ENCODE measurements at regions of chr19 and their contacts with region 1.

Region 1: DNA sequence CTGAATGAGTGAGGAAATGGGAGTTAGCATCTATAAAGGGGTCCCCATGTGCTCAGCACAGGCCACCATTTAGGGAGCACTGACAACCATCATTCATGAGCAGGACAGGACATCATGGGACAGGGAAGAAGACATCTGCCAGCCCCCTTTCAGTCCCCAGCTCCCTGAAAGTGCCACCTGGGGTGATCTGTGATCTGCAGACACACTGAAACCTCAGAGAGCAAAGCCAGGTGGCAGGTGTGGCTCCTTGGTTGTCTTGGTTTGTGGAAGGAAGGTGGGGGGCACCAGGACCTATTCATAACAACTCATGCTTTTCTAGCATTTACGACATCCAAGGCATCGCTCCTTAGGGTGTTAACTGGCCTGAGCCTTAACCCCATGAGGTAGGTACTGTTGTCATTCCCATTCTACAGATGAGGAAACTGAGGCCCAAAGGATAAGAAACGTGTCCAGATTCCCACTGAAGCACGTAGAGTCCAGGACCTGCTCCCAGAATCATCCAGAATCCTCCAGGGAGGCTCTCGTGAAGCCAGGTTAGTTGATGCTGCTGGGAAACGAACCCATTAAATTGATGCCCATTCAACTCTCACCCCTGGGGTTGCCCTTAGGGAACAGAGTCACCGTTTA is 5.8 kb downstream of the KDELR1 start:
- DNase-seq: no peak
- H3K4me3 ChIP-seq: no peak overlapping the region
- H3K27ac ChIP-seq: no peak overlapping the region
- H3K4me1 ChIP-seq: no peaks in the 10 kb centered on the region; a peak in 1 of 7 replicates
- H3K27me3 ChIP-seq: no peaks in the 10 kb centered on the region
- CTCF ChIP-seq: no peak
- EP300 ChIP-seq: no peak
- POLR2A ChIP-seq: no peak
- RAD21 ChIP-seq: no peak

Region 2: GRCh38 chr19:48372904-48373303 is 12.7 kb before region 1 on chr19:
- CTCF ChIA-PET with region 1: interaction called, 14 read pairs
- POLR2A ChIA-PET with region 1: interaction called, 10 read pairs
- DNase-seq: no peak
- H3K4me3 ChIP-seq: no peak overlapping the region
- H3K27ac ChIP-seq: no peak overlapping the region
- H3K4me1 ChIP-seq: no peaks in the 10 kb centered on the region; a peak in 1 of 7 replicates
- H3K27me3 ChIP-seq: peaks cover 0 to 2% (median 0%) of the 10 kb centered on the region in 4 experiments; a peak in 1 of 7 replicates
- CTCF ChIP-seq: no peak
- EP300 ChIP-seq: no peak
- POLR2A ChIP-seq: no peak
- RAD21 ChIP-seq: no peak

Region 3: GRCh38 chr19:48553676-48554386 is 168.3 kb after region 1 on chr19:
- CTCF ChIA-PET with region 1: no interaction called
- POLR2A ChIA-PET with region 1: no interaction called
- DNase-seq: no peak
- H3K4me3 ChIP-seq: peak overlapping the region in 2 of 4 experiments; percentile 5 to 44; a peak in 3 of 8 replicates
- H3K27ac ChIP-seq: peak overlapping the region; percentile 41; the same call in 1 of the 2 replicates
- H3K4me1 ChIP-seq: peaks cover 0 to 24% (median 12%) of the 10 kb centered on the region in 4 experiments; a peak in 6 of 7 replicates
- H3K27me3 ChIP-seq: no peaks in the 10 kb centered on the region; a peak in 1 of 7 replicates
- CTCF ChIP-seq: 0 out of 4 replicates have a peak, but pooled peaks of 1 of the 3 experiments have one; percentile 9
- EP300 ChIP-seq: no peak
- POLR2A ChIP-seq: no peak
- RAD21 ChIP-seq: no peak